Esophagus squamous epithelium (tissue), 5 donors: ENCODE measurements at regions of chr21 and their contacts with region 1.

Region 1: DNA sequence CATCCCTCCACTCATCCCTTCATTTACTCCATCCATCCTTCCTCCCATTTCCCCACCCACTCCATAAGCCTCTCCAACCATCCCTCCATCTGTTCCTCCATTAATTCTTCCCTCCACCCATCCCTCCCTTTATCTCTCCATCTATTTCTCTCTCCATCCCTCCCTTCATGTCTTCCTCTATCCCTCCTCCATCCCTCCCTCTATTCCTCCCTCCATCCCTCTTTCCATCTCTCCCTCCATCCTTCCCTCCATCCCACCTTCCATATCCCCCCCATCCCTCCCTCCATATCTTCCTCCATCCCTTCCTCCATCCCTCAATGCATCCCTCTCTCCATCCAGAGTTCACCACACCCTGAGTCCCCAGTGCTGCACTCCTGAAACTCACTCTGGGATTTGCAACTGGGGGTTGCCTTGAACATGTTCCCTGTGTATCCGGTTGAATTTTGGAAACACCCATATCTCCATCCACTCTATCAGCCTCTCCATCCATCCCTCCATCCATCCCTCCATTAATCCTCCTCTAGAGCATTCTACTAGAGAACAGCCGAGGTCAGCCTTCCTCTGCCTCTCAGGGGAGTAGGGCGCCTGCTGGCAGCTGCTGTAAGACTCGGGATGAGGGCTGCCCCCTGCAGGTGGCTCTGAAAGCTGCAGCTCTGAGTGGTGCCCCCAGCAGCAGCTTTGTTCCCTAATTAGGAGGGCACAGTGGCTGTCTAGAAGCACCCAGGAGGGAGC is 39.4 kb downstream of the ABCG1 start:
- DNase-seq: peak; percentile 32
- H3K4me3 ChIP-seq: no peak overlapping the region
- H3K27ac ChIP-seq: no peak overlapping the region
- H3K4me1 ChIP-seq: peaks cover 5 to 46% (median 24%) of the 10 kb centered on the region in 3 donors
- H3K27me3 ChIP-seq: peaks cover 0 to 66% (median 0%) of the 10 kb centered on the region in 4 donors
- CTCF ChIP-seq: peak; percentile 74 to 92 (median 84)
- POLR2A ChIP-seq: no peak

Region 2: DNA sequence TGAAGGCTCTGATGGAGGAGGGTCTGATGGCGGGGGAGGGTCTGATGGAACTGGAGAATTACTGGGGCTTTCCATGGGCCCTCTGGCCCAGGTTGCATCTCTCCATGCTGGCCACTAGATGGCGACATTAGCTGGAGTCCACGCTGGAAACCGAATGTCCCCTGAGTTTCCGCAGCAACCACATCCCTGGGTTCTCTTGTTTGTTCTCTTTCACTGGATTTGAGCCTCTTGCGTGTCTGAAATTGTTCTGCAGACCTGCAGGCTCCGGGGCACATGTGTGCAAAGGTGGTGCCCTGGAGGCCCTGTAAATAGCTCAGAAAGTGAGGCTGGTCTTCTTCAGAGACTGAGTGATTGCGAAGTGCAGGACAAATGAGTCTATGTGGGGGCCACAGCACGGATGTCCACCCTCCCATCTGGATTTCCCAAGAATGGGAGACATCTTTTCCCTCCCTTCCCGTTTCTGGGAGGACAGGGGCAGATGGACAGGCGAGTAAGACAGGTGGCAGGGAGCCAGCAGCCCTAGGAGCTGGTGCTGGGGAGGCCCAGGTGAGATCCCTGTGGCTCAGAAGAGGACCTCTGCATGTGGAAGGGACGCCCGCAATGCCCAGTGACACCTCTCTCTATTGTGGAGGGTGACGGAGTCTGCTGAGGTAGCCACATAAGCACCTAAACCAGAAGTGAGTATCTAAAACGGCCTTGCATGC is 112.6 kb before region 1 on chr21:
- intact Hi-C with region 1: loop called (anchors 5 kb)
- DNase-seq: no peak
- H3K4me3 ChIP-seq: no peak overlapping the region
- H3K27ac ChIP-seq: no peak overlapping the region
- H3K4me1 ChIP-seq: peaks cover 0 to 7% (median 3%) of the 10 kb centered on the region in 3 donors
- H3K27me3 ChIP-seq: peaks cover 0 to 41% (median 0%) of the 10 kb centered on the region in 4 donors
- CTCF ChIP-seq: peak; percentile 89 to 94 (median 93)
- POLR2A ChIP-seq: no peak

Region 3: DNA sequence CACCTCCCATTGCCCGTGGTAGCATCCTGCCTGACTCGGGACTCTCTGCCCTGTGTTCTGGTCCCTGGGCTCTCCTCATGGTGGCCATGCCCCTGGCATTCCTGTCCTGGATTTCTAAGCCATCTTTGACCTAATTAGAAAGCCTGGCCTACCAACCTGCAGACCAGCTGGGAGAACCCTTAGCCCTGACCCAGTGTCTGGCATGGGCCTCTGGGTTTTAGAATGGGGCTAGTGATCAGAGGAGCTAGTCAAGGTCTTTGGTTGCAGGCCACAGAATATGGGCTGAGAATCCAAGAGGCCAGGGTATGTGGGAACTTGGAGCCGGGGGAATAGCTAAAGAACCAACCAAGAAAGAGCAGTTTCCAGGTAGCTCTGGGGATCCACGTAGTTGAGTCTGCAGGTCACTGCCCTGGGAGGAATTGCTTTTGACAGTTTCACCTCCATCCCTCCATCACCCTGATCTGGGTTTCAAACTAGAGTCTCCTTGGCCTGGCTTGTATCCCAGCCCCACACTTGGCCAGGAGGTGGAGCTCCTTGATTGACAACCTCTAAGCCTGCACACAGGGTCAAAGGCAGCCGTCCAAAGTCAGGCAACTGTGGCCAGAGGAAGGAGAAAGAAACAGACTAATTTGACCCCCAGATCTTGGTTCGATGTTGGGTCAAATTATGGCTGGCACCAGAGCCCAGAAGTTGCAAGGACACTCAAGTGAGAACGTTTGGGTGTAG is 94.1 kb before region 1 on chr21:
- intact Hi-C with region 1: loop called (anchors 5 kb)
- DNase-seq: no peak
- H3K4me3 ChIP-seq: no peak overlapping the region
- H3K27ac ChIP-seq: no peak overlapping the region
- H3K4me1 ChIP-seq: no peaks in the 10 kb centered on the region
- H3K27me3 ChIP-seq: peaks cover 0 to 14% (median 0%) of the 10 kb centered on the region in 4 donors
- CTCF ChIP-seq: peak; percentile 17 to 66 (median 44)
- POLR2A ChIP-seq: no peak

Region 4: GRCh38 chr21:42677339-42678321 is 419.3 kb after region 1 on chr21:
- intact Hi-C with region 1: no loop called
- DNase-seq: no peak
- H3K4me3 ChIP-seq: no peak overlapping the region
- H3K27ac ChIP-seq: no peak overlapping the region
- H3K4me1 ChIP-seq: peaks cover 0 to 29% (median 0%) of the 10 kb centered on the region in 3 donors
- H3K27me3 ChIP-seq: peaks cover 0 to 13% (median 0%) of the 10 kb centered on the region in 4 donors
- CTCF ChIP-seq: no peak
- POLR2A ChIP-seq: no peak

Region 5: DNA sequence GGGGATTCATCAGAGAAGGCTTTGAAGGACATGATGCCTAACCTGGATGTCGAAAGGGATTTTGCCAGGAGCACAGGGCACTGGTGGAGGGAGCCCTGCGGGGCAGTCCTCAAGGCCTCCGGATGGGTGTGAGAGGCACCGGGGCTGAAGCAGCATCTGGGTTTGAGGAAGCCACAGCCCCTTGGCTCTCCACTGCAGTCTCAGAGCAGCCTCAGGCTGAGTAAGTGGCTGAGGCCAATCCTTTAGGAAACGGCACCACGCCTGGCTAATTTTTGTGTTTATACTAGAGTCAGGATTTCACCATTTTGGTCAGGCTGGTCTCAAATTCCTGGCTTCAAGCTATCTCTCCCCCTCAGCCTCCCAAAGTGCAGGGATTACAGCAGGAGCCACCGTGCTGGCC is 655.2 kb after region 1 on chr21:
- intact Hi-C with region 1: no loop called
- DNase-seq: no peak
- H3K4me3 ChIP-seq: no peak overlapping the region
- H3K27ac ChIP-seq: no peak overlapping the region
- H3K4me1 ChIP-seq: no peaks in the 10 kb centered on the region
- H3K27me3 ChIP-seq: no peaks in the 10 kb centered on the region
- CTCF ChIP-seq: no peak
- POLR2A ChIP-seq: no peak